Activated CD4-positive, alpha-beta T cell treated with anti-CD3 and anti-CD28 coated beads, Interleukin-2, amount 10 ng/mL, durations not matched to agents 24 days and 14 days (primary cell): ENCODE measurements at regions of chr3 and their contacts with region 1.

Region 1: DNA sequence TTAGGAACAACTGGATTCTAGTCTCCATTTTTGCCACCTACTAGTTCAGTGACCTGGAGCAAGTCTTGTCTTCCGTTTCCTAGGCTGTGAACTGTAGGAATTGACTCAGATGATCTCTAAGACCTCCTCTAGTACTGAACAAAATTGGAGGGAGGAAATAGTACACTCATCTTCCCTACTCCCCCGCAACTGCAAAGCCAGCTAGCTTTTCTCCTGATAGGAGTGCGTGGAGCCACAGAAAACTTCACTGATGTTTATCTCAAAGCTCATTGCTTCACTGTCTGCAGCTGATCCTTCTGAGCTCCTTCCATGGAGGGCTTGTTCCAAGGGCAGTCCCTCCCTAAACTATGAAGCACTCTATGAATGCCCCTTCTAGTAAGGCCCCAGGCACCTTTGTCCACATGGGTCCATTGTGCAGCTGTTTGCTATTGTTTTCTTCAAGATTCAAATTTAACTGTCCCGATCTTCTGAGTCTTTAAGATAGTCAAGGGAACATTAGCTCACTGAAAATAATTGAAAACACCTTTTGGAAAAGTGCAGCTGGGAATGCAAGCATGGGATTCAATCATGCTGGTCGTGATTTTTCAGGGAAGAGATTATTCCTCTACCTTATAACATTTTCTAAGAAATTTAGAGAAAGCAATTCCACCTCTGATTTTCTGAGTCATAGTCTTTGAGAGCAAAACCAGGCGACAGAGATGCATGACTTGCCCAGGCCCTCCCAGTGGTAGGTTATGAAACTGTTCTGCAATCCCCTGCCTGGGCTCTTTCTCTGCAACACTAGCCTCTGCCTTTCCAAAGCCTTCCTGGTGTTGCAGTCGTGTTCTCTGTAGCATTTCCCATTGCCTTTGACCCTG is 24.3 kb downstream of the FILIP1L start:
- DNase-seq: peak; percentile 80
- H3K4me3 Mint-ChIP-seq: peak overlapping the region; percentile 29
- H3K27ac Mint-ChIP-seq: peak overlapping the region; percentile 38
- H3K4me1 Mint-ChIP-seq: peaks cover 32% of the 10 kb centered on the region
- H3K27me3 Mint-ChIP-seq: peaks cover 4% of the 10 kb centered on the region

Region 2: GRCh38 chr3:99842826-99843589 is 247.0 kb before region 1 on chr3:
- intact Hi-C with region 1: loop called (anchors 5 kb)
- DNase-seq: no peak
- H3K4me3 Mint-ChIP-seq: no peak overlapping the region
- H3K27ac Mint-ChIP-seq: peak overlapping the region; percentile 49
- H3K4me1 Mint-ChIP-seq: peaks cover 18% of the 10 kb centered on the region
- H3K27me3 Mint-ChIP-seq: no peaks in the 10 kb centered on the region

Region 3: DNA sequence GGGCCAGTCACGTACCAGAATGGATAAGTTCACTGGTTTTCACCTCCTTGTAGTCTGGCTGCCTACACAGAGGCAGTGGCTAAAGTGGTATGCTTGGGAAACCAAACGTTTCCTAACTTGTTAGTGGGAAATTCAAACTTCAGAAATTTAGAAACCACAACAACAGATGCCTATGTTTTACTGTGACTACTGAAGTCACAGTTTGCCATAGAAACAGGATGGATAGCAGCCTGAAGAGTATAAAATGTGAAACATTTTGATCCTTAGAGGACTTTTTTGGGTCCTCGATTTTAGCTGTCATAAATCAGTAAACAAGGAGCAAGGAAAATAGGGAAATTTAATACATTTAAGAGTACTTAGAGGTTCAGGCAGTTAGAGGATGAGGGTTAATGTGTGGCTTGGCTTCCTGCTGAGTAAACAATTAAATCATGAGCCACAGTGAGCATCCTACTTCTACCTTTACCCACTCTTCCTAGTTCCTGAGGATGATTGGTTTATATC is 223.7 kb before region 1 on chr3:
- intact Hi-C with region 1: loop called (anchors 2 kb)
- DNase-seq: peak; percentile 81
- H3K4me3 Mint-ChIP-seq: peak overlapping the region; percentile 71
- H3K27ac Mint-ChIP-seq: peak overlapping the region; percentile 87
- H3K4me1 Mint-ChIP-seq: peaks cover 72% of the 10 kb centered on the region
- H3K27me3 Mint-ChIP-seq: no peaks in the 10 kb centered on the region

Region 4: DNA sequence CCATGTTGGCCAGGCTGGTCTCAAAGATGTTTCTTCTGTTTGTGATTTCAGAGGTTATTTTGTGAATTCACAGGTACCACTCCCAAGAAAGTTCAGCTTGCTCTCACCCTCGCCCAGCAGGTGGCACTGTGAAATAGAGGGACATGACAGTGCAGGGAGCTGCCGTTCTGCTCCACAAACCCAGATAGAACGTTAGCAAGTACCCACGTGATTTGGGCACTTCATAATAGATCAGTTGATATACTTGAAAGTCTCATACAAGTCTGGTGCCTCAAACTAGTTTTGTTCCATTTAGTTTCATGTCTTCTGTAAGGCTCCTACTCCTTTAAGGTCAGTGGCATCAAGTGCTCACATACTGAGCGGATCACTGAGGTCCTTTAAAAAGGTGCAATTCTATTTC is 21.2 kb before region 1 on chr3:
- intact Hi-C with region 1: loop called (anchors 1 kb)
- DNase-seq: peak; percentile 94
- H3K4me3 Mint-ChIP-seq: no peak overlapping the region
- H3K27ac Mint-ChIP-seq: no peak overlapping the region
- H3K4me1 Mint-ChIP-seq: peaks cover 40% of the 10 kb centered on the region
- H3K27me3 Mint-ChIP-seq: no peaks in the 10 kb centered on the region

Region 5: GRCh38 chr3:100073899-100074307 is 16.1 kb before region 1 on chr3:
- intact Hi-C with region 1: loop called (anchors 1 kb)
- DNase-seq: peak; percentile 79
- H3K4me3 Mint-ChIP-seq: peak overlapping the region; percentile 79
- H3K27ac Mint-ChIP-seq: peak overlapping the region; percentile 92
- H3K4me1 Mint-ChIP-seq: peaks cover 60% of the 10 kb centered on the region
- H3K27me3 Mint-ChIP-seq: no peaks in the 10 kb centered on the region

Region 6: DNA sequence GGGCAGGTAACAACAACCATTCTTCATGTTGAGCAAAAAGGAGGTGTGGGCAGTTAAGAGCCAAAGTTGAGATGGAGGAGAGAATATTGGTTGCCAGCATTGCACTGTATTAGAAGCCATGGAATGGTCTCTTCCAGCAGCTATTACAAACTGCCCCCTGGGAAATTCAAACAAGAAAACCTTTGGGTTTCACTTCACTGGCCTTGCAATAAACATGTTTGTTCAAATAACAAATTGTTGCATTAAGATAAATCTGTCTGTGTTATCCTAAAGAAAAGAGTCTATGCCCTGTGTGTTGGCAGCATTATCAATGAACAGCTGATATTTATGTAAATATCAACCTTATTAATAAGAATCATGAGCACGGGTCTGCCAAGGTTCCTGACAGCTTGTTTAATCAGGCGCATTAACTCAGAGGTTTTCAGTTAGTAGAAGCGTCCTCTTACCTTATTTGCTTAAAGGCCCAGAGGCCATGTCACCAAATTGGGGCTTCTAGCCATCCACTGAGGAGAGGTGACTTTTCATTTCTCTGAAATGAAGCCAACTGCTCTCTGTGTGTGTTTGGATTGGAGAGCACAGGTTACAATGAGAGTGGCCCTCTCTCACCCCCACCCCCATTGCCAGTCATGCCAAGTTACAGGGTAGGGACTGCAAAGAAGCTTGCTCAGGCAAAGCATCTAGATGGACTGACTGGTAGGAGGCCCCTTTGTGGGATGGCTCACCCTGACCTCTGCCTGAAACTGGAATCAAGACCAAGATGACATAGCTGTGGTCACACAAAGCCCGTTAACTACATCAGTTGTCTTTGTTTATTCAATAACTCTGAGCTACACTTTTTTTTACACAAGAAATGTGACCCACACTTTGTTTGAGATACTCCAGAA is 13.8 kb after region 1 on chr3:
- intact Hi-C with region 1: loop called (anchors 2 kb)
- DNase-seq: no peak
- H3K4me3 Mint-ChIP-seq: no peak overlapping the region
- H3K27ac Mint-ChIP-seq: peak overlapping the region; percentile 14
- H3K4me1 Mint-ChIP-seq: peaks cover 42% of the 10 kb centered on the region
- H3K27me3 Mint-ChIP-seq: no peaks in the 10 kb centered on the region